OCI-LY7 (cell line): ENCODE measurements at regions of chr3 and their contacts with region 1.

Region 1: DNA sequence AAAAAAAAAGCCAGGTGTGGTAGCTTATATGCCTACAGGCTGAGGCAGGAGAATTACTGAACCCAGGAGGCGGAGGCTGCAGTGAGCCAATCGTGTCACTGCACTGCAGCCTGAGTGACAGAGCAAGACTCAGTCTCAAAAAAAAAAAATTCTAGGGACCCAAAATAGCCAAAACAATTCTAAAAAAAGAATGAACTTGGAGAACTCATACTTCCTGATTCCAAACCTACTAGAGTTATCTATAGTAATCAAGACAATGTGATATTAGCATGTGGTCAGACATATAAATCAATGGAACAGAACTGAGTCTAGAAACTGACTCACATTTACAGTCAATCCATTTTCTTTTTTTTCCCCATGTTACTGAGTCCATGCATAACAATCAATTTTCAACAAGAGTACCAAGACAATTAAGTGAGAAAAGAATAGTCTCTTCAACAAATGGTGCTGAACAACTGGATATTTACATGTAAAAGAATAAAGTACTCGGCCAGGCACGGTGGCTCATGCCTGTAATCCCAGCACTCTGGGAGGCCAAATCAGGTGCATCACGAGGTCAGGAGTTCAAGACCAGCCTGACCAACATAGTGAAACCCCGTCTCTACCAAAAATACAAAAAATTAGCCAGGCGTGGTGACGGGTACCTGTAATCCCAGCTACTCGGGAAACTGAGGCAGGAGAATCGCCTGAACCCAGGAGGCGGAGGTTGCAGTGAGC is 11.9 kb downstream of the PRKAR2A start:
- DNase-seq: no peak
- H3K4me3 ChIP-seq: no peak overlapping the region
- H3K27ac ChIP-seq: no peak overlapping the region
- H3K4me1 ChIP-seq: no peaks in the 10 kb centered on the region
- CTCF ChIP-seq: no peak

Region 2: DNA sequence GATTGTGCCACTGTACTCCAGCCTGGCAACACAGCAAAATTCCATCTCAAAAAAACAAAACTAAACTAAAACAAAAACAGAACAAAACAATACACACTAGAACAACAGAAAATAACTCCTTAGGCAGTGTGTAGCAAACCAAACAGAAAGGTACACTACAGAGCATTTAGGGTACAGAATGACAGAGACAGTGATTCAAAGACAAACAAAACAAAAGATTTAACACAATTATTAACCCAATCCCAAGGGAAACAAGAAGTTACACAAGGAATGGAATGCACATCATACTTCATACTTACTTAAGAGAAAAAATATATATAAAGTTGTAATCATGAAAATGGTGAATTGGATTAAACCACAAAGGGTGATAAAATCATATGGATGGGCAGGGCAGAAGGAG is 49.9 kb after region 1 on chr3:
- CTCF ChIA-PET with region 1: no interaction called
- POLR2A ChIA-PET with region 1: interaction called, 10 read pairs
- intact Hi-C with region 1: no loop called
- DNase-seq: no peak
- H3K4me3 ChIP-seq: no peak overlapping the region
- H3K27ac ChIP-seq: no peak overlapping the region
- H3K4me1 ChIP-seq: no peaks in the 10 kb centered on the region
- CTCF ChIP-seq: no peak